A549 (cell line): ENCODE measurements at regions of chr10 and their contacts with region 1.

Region 1: DNA sequence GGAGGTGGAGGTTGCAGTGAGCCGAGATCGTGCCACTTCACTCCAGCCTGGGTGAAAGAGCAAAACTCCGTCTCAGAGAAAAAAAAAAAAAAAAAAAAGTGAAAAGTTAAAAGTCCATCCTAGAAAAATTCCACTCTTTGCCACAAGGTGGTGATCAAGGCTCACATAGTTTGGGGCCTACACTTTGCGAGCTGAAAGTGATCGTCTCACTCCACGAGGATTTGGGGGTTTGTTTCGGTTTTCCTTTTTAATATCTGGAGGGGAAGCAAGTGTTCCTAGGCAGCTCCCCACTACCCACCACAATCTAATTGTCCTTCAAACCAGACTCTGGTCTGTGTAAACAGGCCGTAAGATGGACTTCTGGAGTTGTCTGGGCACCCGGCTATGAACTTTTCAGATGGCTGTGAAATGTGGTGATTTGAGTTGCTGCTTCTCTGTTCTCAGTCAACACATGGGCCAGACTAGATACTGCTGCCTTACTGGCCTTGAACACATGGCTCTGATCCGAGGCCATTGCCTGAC is 27.1 kb downstream of the PRLHR start:
- DNase-seq: peak; percentile 56 to 58
- ATAC-seq: peak; percentile 36 to 84; a peak in 4 of 6 replicates
- H3K4me3 ChIP-seq: no peak overlapping the region
- H3K27ac ChIP-seq: peak overlapping the region; percentile 29 to 42; a peak in 2 of 6 replicates
- H3K4me1 ChIP-seq: no peaks in the 10 kb centered on the region
- CTCF ChIP-seq: peak; percentile 77
- EP300 ChIP-seq: no peak
- POLR2A ChIP-seq: no peak
- RAD21 ChIP-seq: peak; percentile 87 to 91

Region 2: GRCh38 chr10:118557946-118558345 is 10.4 kb before region 1 on chr10:
- CTCF ChIA-PET with region 1: interaction called, 18 read pairs
- POLR2A ChIA-PET with region 1: no interaction called
- DNase-seq: no peak
- ATAC-seq: no peak
- H3K4me3 ChIP-seq: no peak overlapping the region
- H3K27ac ChIP-seq: no peak overlapping the region
- H3K4me1 ChIP-seq: no peaks in the 10 kb centered on the region
- CTCF ChIP-seq: no peak
- EP300 ChIP-seq: no peak
- POLR2A ChIP-seq: no peak
- RAD21 ChIP-seq: no peak

Region 3: DNA sequence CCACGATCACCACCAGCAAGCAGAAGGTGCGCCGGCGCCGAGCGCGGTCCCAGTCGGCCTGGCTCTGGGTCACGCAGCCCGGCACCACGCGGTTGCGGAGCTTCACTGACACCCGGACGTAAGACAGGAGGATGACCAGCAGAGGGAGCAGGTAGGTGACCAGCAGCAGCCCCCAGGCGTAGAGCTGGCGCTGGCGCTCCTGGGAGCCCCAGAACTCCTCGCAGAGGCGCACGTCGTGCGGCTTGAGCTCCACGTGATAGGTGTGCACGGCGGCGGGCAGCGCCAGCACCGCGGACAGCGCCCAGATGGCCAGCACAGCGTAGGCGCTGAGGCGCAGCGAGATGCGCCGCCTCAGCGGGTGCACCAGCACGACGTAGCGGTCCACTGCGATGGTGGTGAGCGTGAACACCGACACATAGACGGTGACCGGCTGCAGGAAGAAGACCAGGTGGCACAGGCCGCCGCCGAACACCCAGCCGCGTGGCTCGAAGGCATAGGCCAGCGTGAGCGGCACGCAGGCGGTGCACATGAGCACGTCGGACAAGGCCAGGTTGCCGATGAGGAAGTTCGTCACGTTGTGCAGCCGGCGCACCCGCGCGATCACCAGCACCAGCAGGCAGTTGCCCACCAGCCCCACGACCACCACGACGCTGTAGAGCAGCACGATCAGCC is 26.1 kb after region 1 on chr10:
- CTCF ChIA-PET with region 1: interaction called, 10 read pairs
- POLR2A ChIA-PET with region 1: no interaction called
- DNase-seq: peak; percentile 53 to 56
- ATAC-seq: peak; percentile 64 to 89
- H3K4me3 ChIP-seq: no peak overlapping the region
- H3K27ac ChIP-seq: no peak overlapping the region
- H3K4me1 ChIP-seq: no peaks in the 10 kb centered on the region
- CTCF ChIP-seq: no peak
- EP300 ChIP-seq: no peak
- POLR2A ChIP-seq: no peak
- RAD21 ChIP-seq: no peak; a peak in 2 of 5 replicates

Region 4: DNA sequence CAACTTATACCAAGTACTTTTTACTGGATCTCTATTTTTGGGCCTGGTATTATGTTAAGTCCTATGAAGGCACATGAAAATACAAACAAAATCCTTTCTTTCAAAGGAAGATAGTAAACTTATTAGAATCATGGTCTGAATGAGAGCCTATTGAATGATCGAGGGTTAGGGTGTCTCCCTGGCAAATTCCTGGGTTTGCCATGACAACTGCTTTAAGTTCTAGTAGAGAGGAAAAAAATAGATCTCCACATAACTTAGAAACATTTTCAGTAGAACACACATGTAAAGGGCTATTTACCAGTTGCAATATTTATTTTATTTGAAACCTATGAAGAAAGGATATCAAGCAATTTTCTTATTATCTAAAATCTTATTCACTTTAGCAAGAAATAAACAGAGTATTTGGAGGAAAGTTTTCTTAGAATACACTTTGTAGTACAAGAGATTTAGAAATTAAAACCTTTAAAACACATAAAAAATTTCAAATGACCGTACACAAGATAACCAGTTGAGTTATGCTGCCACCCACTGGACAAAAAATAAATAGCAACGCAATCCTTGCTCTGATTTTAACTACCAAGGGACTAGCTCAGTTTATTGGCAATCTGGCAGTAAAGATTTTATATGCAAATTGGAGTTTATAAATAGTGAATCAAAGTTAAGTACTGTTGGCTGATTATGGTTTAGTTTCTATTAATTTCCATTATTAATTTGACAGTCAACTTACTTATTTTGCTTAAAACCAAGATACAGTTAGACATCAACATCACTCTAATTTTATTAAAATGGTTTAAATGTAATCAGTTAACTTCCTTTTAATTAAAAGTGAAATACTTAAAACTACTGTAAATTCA is 152.5 kb after region 1 on chr10:
- CTCF ChIA-PET with region 1: interaction called, 44 read pairs
- POLR2A ChIA-PET with region 1: interaction called, 5 read pairs
- DNase-seq: peak; percentile 31 to 47
- ATAC-seq: peak in 1 of 2 experiments; percentile 73; a peak in 3 of 6 replicates
- H3K4me3 ChIP-seq: no peak overlapping the region
- H3K27ac ChIP-seq: no peak overlapping the region
- H3K4me1 ChIP-seq: peaks cover 1% of the 10 kb centered on the region; the same call in 1 of the 3 replicates
- CTCF ChIP-seq: peak; percentile 90
- EP300 ChIP-seq: no peak
- POLR2A ChIP-seq: no peak
- RAD21 ChIP-seq: peak; percentile 71 to 75

Region 5: DNA sequence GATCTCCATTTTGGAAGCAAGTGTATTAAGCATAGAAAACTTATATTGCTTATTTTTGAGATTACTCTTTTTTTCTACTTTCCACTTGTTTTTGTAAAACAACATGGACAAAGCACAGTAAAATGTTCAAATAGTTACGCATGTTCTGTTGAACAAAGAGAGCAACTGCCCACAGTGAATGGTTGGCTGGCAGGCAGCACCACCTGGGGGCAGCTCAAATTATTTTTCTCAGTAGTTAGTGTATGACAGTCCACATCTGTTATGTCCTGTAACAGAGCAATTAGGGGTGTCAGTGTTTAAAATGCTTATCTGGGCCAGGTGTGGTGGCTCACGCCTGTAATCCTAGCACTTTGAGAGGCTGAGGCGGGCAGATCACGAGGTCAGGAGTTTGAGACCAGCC is 232.5 kb after region 1 on chr10:
- CTCF ChIA-PET with region 1: interaction called, 16 read pairs
- POLR2A ChIA-PET with region 1: no interaction called
- DNase-seq: peak in 1 of 2 experiments; percentile 17
- ATAC-seq: peak; percentile 57 to 71; a peak in 3 of 6 replicates
- H3K4me3 ChIP-seq: no peak overlapping the region
- H3K27ac ChIP-seq: no peak overlapping the region
- H3K4me1 ChIP-seq: peaks cover 23% of the 10 kb centered on the region
- CTCF ChIP-seq: peak; percentile 33; the same call in 1 of the 3 replicates
- EP300 ChIP-seq: no peak
- POLR2A ChIP-seq: no peak
- RAD21 ChIP-seq: peak; percentile 60 to 74